GM12878 (cell line): ENCODE measurements at regions of chr1 and their contacts with region 1.

Region 1: DNA sequence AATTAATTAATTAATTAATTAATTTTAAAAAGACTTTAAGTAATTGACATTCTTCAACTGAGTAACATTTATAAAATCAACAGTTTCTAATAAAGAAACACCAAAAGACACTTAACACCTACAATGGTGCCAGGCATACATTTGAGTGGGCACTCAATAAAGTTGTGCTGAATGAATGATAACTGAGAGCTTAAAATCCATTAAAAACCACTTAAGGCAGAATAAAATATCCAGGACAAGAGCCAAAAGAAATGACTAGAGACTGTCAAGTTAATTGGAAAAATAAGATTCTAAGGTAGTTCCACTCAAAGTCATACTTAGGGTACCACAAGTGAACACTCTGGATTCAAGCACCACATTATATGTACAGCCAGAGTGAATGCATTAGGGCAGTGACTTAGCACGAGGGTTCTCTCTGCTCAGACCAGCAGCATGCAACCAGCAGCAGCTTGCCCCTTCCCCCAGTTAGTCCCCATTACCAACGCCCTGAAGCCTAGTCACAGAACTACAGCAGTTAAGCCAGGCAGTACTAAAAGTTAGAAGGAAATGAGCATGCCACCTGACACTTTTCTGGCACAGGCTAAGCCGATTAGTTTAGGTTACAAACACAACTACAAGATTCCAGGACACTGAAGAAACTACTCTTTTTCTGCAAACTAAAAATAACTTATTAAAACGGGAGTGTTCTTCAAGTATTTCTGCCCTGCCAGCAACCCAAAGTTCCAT is 46.5 kb downstream of the LUZP1 start:
- DNase-seq: no peak
- ATAC-seq: peak; percentile 23; the same call in 2 of the 3 replicates
- H3K4me3 ChIP-seq: no peak overlapping the region
- H3K27ac ChIP-seq: no peak overlapping the region
- H3K4me1 ChIP-seq: peaks cover 29% of the 10 kb centered on the region
- H3K27me3 ChIP-seq: no peaks in the 10 kb centered on the region
- CTCF ChIP-seq: no peak
- EP300 ChIP-seq: no peak
- POLR2A ChIP-seq: no peak
- RAD21 ChIP-seq: no peak

Region 2: DNA sequence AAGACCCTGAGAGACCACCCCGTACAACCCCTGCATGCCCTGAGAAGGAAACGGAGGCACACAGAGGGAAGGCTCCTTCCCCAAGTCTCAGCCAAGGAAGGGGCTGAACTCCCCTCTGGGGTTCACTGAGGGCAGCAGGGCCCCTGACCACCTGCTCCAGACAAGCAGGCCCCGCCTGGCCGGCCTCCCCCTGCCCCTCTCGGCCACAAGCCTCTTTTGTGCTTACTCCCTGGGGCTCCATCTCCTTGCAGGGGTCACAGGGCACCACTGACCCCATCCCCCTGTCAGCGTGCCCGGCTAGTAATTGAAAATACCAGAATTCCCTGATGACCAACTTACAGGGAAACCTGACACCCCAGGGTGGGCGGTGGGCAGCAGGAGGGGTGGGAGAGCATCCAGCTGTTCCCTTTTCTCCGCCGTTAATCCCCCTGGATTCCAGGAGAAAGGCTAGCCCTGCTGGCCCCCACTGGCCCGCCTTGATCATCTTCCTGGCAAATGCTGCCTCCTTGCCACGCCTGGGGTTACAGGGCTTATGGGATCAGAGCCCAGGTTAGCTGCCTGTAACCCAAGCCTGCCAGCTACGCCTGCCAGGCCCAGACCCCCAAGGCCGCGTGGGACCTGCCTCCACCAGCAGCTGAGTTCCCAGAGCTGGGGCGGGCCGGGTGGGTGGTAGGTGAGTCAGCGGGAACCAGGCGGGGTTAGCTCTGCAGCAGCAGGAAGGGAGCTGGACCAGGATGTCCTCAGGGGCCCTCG is 245.7 kb before region 1 on chr1:
- CTCF ChIA-PET with region 1: no interaction called
- POLR2A ChIA-PET with region 1: no interaction called
- RAD21 ChIA-PET with region 1: no interaction called
- SMC1A ChIA-PET with region 1: no interaction called
- in situ Hi-C with region 1: no loop called
- intact Hi-C with region 1: no loop called
- DNase-seq: no peak
- ATAC-seq: no peak
- H3K4me3 ChIP-seq: no peak overlapping the region
- H3K27ac ChIP-seq: no peak overlapping the region
- H3K4me1 ChIP-seq: no peaks in the 10 kb centered on the region
- H3K27me3 ChIP-seq: peaks cover 0 to 3% of the 10 kb centered on the region in 2 experiments; a peak in 2 of 4 replicates
- CTCF ChIP-seq: no peak
- EP300 ChIP-seq: no peak
- POLR2A ChIP-seq: no peak
- RAD21 ChIP-seq: no peak

Region 3: GRCh38 chr1:23108918-23109533 is 13.2 kb before region 1 on chr1:
- CTCF ChIA-PET with region 1: interaction called, 93 read pairs
- POLR2A ChIA-PET with region 1: interaction called, 5 read pairs
- RAD21 ChIA-PET with region 1: interaction called, 8 read pairs
- SMC1A ChIA-PET with region 1: interaction called, 188 read pairs
- in situ Hi-C with region 1: no loop called
- intact Hi-C with region 1: no loop called
- DNase-seq: no peak
- ATAC-seq: no peak
- H3K4me3 ChIP-seq: no peak overlapping the region
- H3K27ac ChIP-seq: no peak overlapping the region
- H3K4me1 ChIP-seq: peaks cover 20% of the 10 kb centered on the region
- H3K27me3 ChIP-seq: no peaks in the 10 kb centered on the region
- CTCF ChIP-seq: no peak
- EP300 ChIP-seq: no peak
- POLR2A ChIP-seq: no peak
- RAD21 ChIP-seq: no peak

Region 4: GRCh38 chr1:23149114-23149513 is 26.9 kb after region 1 on chr1:
- CTCF ChIA-PET with region 1: interaction called, 4 read pairs
- POLR2A ChIA-PET with region 1: interaction called, 5 read pairs
- RAD21 ChIA-PET with region 1: no interaction called
- SMC1A ChIA-PET with region 1: interaction called, 13 read pairs
- in situ Hi-C with region 1: no loop called
- intact Hi-C with region 1: no loop called
- DNase-seq: peak; percentile 34
- ATAC-seq: peak; percentile 94
- H3K4me3 ChIP-seq: no peak overlapping the region
- H3K27ac ChIP-seq: no peak overlapping the region
- H3K4me1 ChIP-seq: no peaks in the 10 kb centered on the region
- H3K27me3 ChIP-seq: no peaks in the 10 kb centered on the region
- CTCF ChIP-seq: no peak
- EP300 ChIP-seq: no peak
- POLR2A ChIP-seq: no peak
- RAD21 ChIP-seq: no peak

Region 5: GRCh38 chr1:23163395-23163794 is 41.2 kb after region 1 on chr1:
- CTCF ChIA-PET with region 1: interaction called, 7 read pairs
- POLR2A ChIA-PET with region 1: interaction called, 10 read pairs
- RAD21 ChIA-PET with region 1: interaction called, 5 read pairs
- SMC1A ChIA-PET with region 1: interaction called, 4 read pairs
- in situ Hi-C with region 1: no loop called
- intact Hi-C with region 1: no loop called
- DNase-seq: no peak
- ATAC-seq: no peak
- H3K4me3 ChIP-seq: no peak overlapping the region
- H3K27ac ChIP-seq: no peak overlapping the region
- H3K4me1 ChIP-seq: no peaks in the 10 kb centered on the region
- H3K27me3 ChIP-seq: no peaks in the 10 kb centered on the region
- CTCF ChIP-seq: no peak
- EP300 ChIP-seq: no peak
- POLR2A ChIP-seq: no peak
- RAD21 ChIP-seq: no peak

Region 6: GRCh38 chr1:23177438-23178380 is 55.5 kb after region 1 on chr1:
- CTCF ChIA-PET with region 1: interaction called, 42 read pairs
- POLR2A ChIA-PET with region 1: interaction called, 5 read pairs
- RAD21 ChIA-PET with region 1: interaction called, 19 read pairs
- SMC1A ChIA-PET with region 1: interaction called, 199 read pairs
- in situ Hi-C with region 1: no loop called
- intact Hi-C with region 1: no loop called
- DNase-seq: peak; percentile 46
- ATAC-seq: peak; percentile 94
- H3K4me3 ChIP-seq: peak overlapping the region; percentile 62
- H3K27ac ChIP-seq: peak overlapping the region; percentile 47
- H3K4me1 ChIP-seq: peaks cover 19% of the 10 kb centered on the region
- H3K27me3 ChIP-seq: no peaks in the 10 kb centered on the region
- CTCF ChIP-seq: 0 out of 6 replicates have a peak, but pooled peaks of 1 of the 3 experiments have one; percentile 1
- EP300 ChIP-seq: peak in 1 of 2 experiments; percentile 30; a peak in 1 of 4 replicates
- POLR2A ChIP-seq: peak; percentile 50
- RAD21 ChIP-seq: no peak

Region 7: DNA sequence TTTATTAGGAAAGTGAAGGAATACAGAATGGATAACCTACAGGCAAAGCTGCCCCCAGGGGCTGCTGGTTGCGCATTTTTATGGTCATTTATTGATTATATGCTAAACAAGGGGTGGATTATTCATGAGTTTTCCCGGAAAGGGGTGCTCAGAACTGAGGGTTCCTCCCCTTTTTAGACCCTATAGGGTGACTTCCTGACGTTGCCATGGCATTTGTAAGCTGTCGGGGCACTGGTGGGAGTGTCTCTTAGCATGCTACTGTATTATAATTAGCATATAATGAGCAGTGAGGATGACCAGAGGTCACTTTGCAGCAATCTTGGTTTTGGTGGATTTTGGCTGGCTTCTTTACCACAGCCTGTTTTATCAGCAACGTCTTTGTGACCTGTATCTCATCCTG is 367.7 kb after region 1 on chr1:
- CTCF ChIA-PET with region 1: no interaction called
- POLR2A ChIA-PET with region 1: no interaction called
- RAD21 ChIA-PET with region 1: no interaction called
- SMC1A ChIA-PET with region 1: no interaction called
- in situ Hi-C with region 1: no loop called
- intact Hi-C with region 1: no loop called
- DNase-seq: no peak
- ATAC-seq: no peak
- H3K4me3 ChIP-seq: no peak overlapping the region
- H3K27ac ChIP-seq: no peak overlapping the region
- H3K4me1 ChIP-seq: no peaks in the 10 kb centered on the region; the same call in 1 of the 2 replicates
- H3K27me3 ChIP-seq: peaks cover 0 to 3% of the 10 kb centered on the region in 2 experiments; a peak in 1 of 4 replicates
- CTCF ChIP-seq: no peak
- EP300 ChIP-seq: no peak
- POLR2A ChIP-seq: no peak
- RAD21 ChIP-seq: no peak

Region 8: DNA sequence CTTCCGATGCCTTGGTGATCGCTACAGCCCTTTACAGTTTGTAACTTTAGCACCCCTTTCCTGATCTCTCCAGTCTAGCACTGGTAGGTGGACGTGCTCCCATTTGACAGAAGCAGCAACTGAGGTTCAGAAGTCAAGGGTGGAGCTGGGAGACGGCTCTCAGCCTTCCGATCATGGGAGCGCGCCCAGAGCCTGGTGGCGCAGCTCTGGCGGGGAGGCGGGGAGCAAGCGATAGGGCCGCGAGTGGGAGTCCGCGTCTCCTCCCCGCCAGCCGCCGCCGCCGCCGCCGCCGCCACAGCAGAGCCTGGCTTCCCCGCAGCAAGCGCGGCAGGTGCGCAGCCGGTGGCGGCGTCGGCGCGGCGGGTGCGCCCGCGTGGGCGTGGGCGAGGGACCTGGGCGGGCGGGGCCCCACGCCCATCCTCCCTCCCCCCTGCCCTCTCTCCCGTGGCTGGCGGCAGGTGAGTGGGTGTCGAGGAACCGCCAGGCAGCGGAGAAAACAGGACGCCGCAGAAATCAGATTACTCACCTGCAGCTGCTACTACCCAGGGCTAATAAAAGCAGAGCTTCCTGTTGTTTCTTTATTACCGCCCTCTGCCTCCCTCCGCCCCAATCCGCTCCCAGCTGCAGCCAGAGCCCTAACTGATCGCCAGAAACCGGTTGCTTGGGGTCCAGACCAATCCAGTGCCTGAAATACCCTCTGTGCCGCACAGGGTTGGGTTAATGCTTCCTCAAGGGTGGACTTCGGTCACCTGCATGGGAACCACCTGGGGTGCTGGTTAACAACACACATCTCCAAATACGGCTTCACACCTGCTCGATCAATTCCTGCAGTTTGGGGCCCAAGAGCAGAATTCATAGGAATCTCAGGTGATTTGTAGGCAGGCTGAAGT is 497.4 kb after region 1 on chr1:
- CTCF ChIA-PET with region 1: no interaction called
- POLR2A ChIA-PET with region 1: no interaction called
- RAD21 ChIA-PET with region 1: no interaction called
- SMC1A ChIA-PET with region 1: no interaction called
- in situ Hi-C with region 1: no loop called
- intact Hi-C with region 1: no loop called
- DNase-seq: no peak
- ATAC-seq: peak; percentile 82
- H3K4me3 ChIP-seq: peak overlapping the region; percentile 64
- H3K27ac ChIP-seq: peak overlapping the region; percentile 51
- H3K4me1 ChIP-seq: peaks cover 36% of the 10 kb centered on the region
- H3K27me3 ChIP-seq: no peaks in the 10 kb centered on the region
- CTCF ChIP-seq: no peak
- EP300 ChIP-seq: peak; percentile 50 to 67; a peak in 1 of 4 replicates
- POLR2A ChIP-seq: peak; percentile 64
- RAD21 ChIP-seq: no peak